Heart right ventricle (tissue), 16 donors: ENCODE measurements at regions of chr4 and their contacts with region 1.

Region 1: GRCh38 chr4:26081795-26082498 is 167.9 kb downstream of the SMIM20 start:
- DNase-seq: no peak
- ATAC-seq: peak in 7 of 8 donors; percentile 44 to 66 (median 53)
- H3K4me3 ChIP-seq: no peak overlapping the region
- H3K27ac ChIP-seq: peak overlapping the region in 1 of 10 donors; percentile 34
- H3K4me1 ChIP-seq: peaks cover 0 to 52% (median 0%) of the 10 kb centered on the region in 9 donors
- H3K27me3 ChIP-seq: peaks cover 0 to 11% (median 2%) of the 10 kb centered on the region in 7 donors
- CTCF ChIP-seq: peak; percentile 60 to 82 (median 72)

Region 2: GRCh38 chr4:26226629-26227376 is 144.9 kb after region 1 on chr4:
- intact Hi-C with region 1: no loop called
- DNase-seq: no peak
- ATAC-seq: no peak
- H3K4me3 ChIP-seq: no peak overlapping the region
- H3K27ac ChIP-seq: no peak overlapping the region
- H3K4me1 ChIP-seq: no peaks in the 10 kb centered on the region
- H3K27me3 ChIP-seq: no peaks in the 10 kb centered on the region
- CTCF ChIP-seq: no peak

Region 3: GRCh38 chr4:26330186-26330787 is 248.3 kb after region 1 on chr4:
- intact Hi-C with region 1: loop called in 5 of 10 experiments (anchors 10 kb)
- DNase-seq: no peak
- ATAC-seq: peak in 5 of 8 donors; percentile 66 to 78 (median 76)
- H3K4me3 ChIP-seq: no peak overlapping the region
- H3K27ac ChIP-seq: peak overlapping the region in 1 of 10 donors; percentile 5
- H3K4me1 ChIP-seq: peaks cover 0 to 82% (median 26%) of the 10 kb centered on the region in 9 donors
- H3K27me3 ChIP-seq: no peaks in the 10 kb centered on the region
- CTCF ChIP-seq: peak; percentile 48 to 76 (median 69)